WTC11 (cell line): ENCODE measurements at regions of chr20 and their contacts with region 1.

Region 1: DNA sequence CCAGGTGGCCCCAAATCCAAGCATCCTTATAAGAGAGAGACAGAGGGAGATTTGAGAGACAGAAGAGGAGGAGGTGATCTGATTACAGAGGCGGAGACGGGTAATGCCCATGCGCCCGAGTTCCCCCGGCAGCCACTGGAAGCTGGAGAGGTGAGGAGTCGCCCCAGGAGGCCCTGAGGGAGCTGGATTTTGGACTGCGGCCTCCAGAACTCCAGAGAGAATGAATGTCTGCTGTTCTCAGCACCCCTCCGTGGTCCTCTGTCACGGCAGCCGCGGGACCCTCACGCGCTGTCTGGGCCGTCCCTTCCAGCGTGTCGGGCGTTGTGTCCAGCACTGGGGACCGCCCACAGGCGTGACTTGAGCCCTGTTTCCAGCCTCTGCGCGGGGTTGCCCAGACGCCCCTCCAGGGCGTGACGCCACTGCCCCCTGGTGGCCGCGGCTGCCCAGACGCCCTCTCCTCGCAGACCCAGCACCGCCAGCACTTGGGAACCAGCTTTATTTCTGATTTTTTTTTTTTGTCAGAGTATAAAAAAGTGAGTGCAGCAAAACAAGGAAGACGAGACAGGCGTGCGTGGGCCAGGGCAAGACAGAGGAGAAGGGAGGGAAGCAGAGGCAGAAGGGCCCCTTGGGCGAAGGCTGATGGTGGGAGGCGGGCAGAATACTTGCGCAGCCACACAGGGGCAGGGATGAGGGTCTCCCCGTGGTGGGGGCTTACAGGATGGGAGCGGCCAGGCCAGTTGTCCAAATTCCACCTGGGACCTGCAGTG is 4.1 kb upstream of the ZNF512B start:
- DNase-seq: peak; percentile 89
- ATAC-seq: peak; percentile 70
- H3K4me3 Mint-ChIP-seq: peak overlapping the region; percentile 55
- H3K27ac Mint-ChIP-seq: no peak overlapping the region
- H3K4me1 Mint-ChIP-seq: peaks cover 18% of the 10 kb centered on the region
- H3K27me3 Mint-ChIP-seq: peaks cover 34% of the 10 kb centered on the region
- CTCF ChIP-seq: peak; percentile 98

Region 2: GRCh38 chr20:63739130-63740069 is 234.4 kb before region 1 on chr20 and contains the start of gene SLC2A4RG:
- CTCF ChIA-PET with region 1: interaction called, 10 read pairs
- POLR2A ChIA-PET with region 1: no interaction called
- DNase-seq: peak; percentile 58
- ATAC-seq: peak; percentile 61
- H3K4me3 Mint-ChIP-seq: peak within 1 kb of the TSS; percentile 60
- H3K27ac Mint-ChIP-seq: no peak within 1 kb of the TSS
- H3K4me1 Mint-ChIP-seq: no peaks in the 10 kb centered on the region
- H3K27me3 Mint-ChIP-seq: no peaks in the 10 kb centered on the region
- CTCF ChIP-seq: no peak
- total RNA-seq, gene SLC2A4RG: 41.6 to 47.2 TPM (median 43.3 TPM) in 3 replicates

Region 3: GRCh38 chr20:63894358-63895201 is 79.2 kb before region 1 on chr20 and contains the start of gene DNAJC5:
- CTCF ChIA-PET with region 1: interaction called, 12 read pairs
- POLR2A ChIA-PET with region 1: no interaction called
- DNase-seq: peak; percentile 92
- ATAC-seq: peak; percentile 93
- H3K4me3 Mint-ChIP-seq: peak within 1 kb of the TSS; percentile 87
- H3K27ac Mint-ChIP-seq: peak within 1 kb of the TSS; percentile 81
- H3K4me1 Mint-ChIP-seq: peaks cover 15% of the 10 kb centered on the region
- H3K27me3 Mint-ChIP-seq: no peaks in the 10 kb centered on the region
- CTCF ChIP-seq: no peak
- total RNA-seq, gene DNAJC5: 28.5 to 31.5 TPM (median 29.6 TPM) in 3 replicates

Region 4: DNA sequence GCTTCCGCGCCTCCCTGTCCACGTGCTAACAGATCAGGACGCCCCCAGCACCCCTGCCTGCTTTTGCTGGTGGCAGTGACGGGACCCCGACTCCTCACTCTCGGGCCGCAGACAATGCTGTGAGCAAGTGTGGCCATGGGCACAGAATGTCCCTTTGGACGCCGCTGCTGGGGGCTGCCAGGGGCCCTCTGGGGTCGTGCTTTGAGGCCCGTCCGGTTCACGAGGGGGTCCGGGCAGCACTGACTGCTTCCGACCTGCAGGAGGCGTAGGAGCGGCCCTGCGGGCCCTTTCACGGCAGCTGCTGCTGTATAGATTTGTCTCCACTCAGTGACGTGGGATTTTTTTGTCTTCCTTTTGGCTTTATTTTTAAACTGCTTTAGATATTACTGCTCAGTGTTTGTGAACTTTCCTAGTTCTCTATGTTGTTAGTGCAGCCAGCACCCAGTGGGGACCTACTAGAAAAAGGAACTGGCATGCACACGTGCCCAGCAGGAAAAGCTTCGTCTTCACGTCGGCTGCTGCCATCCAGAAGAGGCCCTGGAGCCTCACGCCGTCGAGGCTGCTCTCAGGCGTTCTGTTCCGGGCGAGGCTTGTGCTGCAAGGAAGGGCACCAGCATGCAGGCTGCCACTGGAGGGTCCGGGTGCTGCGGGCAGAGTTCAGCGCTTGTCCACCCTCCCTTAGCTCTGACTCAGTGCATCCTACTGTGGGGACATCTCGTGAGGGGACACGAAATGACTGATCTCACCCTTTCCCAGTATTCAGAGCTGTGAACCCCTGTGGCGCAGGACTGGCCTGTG is 39.3 kb before region 1 on chr20:
- CTCF ChIA-PET with region 1: interaction called, 21 read pairs
- POLR2A ChIA-PET with region 1: no interaction called
- DNase-seq: peak; percentile 70
- ATAC-seq: peak; percentile 70
- H3K4me3 Mint-ChIP-seq: no peak overlapping the region
- H3K27ac Mint-ChIP-seq: peak overlapping the region; percentile 70; the same call in 1 of the 2 replicates
- H3K4me1 Mint-ChIP-seq: 0 out of 2 replicates have a peak, but pooled peaks cover 2% of the 10 kb centered on the region
- H3K27me3 Mint-ChIP-seq: no peaks in the 10 kb centered on the region
- CTCF ChIP-seq: peak; percentile 38; the same call in 1 of the 2 replicates

Region 5: GRCh38 chr20:63955827-63956663 is 17.8 kb before region 1 on chr20 and contains the start of gene UCKL1:
- CTCF ChIA-PET with region 1: interaction called, 54 read pairs
- POLR2A ChIA-PET with region 1: interaction called, 3 read pairs
- DNase-seq: peak; percentile 90
- ATAC-seq: peak; percentile 69
- H3K4me3 Mint-ChIP-seq: peak within 1 kb of the TSS; percentile 79
- H3K27ac Mint-ChIP-seq: no peak within 1 kb of the TSS; the same call in 1 of the 2 replicates
- H3K4me1 Mint-ChIP-seq: peaks cover 20% of the 10 kb centered on the region
- H3K27me3 Mint-ChIP-seq: no peaks in the 10 kb centered on the region
- CTCF ChIP-seq: no peak
- total RNA-seq, gene UCKL1: 46.8 to 51.2 TPM (median 48.0 TPM) in 3 replicates